ENCODE measurements at regions of chr15 and their contacts with region 1.

Region 1: DNA sequence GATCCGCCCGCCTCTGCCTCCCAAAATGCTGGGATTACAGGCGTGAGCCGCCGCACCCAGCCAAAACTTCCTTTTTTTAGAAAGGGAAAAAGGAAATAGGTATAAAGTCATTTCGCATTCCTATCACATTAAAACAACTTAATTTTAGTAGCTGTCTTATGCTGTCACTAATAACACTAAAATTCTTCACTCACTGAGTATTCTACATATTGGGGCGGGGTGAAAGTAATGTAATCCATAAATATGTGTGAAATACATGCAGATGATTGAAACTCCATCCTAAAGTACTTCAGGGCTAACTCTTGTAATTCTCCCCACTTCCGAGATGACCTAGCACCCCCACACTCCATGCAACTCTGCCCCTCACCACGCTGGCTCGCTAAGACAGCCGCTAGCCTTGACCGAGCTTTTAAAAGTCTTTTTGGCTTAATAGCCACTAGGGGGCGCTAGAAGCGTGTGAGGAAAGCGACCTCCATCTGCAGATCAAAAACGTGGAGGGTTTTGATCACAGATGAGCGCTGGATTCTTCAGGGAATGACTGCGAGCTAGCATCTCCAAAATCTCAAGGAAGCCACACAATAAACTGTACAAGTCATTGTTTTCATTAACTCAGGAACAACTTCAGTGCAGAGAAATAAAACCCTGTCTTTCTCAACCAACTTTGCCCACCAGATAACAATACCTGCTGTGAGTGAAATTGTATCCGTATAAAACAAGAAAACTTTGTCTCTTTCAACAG is 129.3 kb upstream of the IGF1R start:
- DNase-seq: peak; percentile 57
- H3K4me3 ChIP-seq: no peak overlapping the region
- H3K27ac ChIP-seq: no peak overlapping the region
- H3K4me1 ChIP-seq: no peaks in the 10 kb centered on the region
- H3K27me3 ChIP-seq: no peaks in the 10 kb centered on the region
- CTCF ChIP-seq: peak; percentile 63 to 83

Region 2: GRCh38 chr15:98442379-98442833 is 76.6 kb before region 1 on chr15:
- CTCF ChIA-PET with region 1: no interaction called
- dilution Hi-C with region 1: loop called (anchors 5 kb)
- in situ Hi-C with region 1: no loop called
- intact Hi-C with region 1: loop called (anchors 1 kb)
- DNase-seq: peak; percentile 86
- H3K4me3 ChIP-seq: no peak overlapping the region
- H3K27ac ChIP-seq: no peak overlapping the region
- H3K4me1 ChIP-seq: peaks cover 6% of the 10 kb centered on the region
- H3K27me3 ChIP-seq: no peaks in the 10 kb centered on the region
- CTCF ChIP-seq: peak; percentile 89 to 97

Region 3: GRCh38 chr15:98581715-98582114 is 62.7 kb after region 1 on chr15:
- CTCF ChIA-PET with region 1: no interaction called
- dilution Hi-C with region 1: no loop called
- in situ Hi-C with region 1: no loop called
- intact Hi-C with region 1: loop called (anchors 2 kb)
- DNase-seq: no peak
- H3K4me3 ChIP-seq: no peak overlapping the region
- H3K27ac ChIP-seq: no peak overlapping the region
- H3K4me1 ChIP-seq: peaks cover 3% of the 10 kb centered on the region
- H3K27me3 ChIP-seq: peaks cover 3% of the 10 kb centered on the region
- CTCF ChIP-seq: peak; percentile 23 to 40

Region 4: DNA sequence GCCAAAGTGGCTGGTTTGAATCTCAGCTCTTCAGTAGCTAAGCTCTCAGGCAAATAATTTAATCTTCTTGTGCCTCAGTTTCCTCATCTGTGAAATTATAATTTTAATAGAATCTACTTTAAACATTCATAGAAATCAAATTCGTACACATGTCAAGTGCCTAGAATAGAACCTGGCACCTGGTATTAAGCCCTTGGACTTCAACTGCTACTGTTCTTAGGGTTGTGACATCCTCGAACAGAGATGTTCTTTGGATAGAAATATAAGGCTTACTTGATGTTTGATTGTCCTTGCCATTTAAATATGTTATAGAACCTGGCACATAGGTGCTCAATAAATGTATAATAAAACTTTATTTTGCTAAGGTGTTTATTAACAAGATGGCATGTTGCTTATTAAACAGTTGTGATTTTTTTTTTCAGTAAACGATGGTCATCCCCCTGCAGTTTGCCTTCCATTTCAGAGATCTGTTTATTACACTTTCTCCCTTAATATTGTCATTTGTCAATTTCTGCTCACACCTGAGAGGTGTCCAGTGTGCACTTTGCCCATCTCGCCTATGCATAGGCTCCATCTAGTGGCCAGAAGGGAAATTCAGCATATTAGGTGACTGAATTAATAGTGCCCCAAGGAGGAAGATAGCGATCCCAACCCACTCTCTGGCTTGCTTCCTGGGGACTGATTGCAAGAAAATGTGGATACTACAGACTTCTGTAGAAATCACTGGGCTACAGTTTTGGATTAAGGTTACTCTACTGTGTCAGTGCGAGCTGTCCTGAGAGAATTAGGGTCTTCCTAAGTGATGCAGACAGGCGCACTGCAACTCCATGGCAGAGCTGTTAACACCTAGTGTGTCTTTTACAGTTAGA is 140.1 kb after region 1 on chr15:
- CTCF ChIA-PET with region 1: interaction called, 3 read pairs
- dilution Hi-C with region 1: no loop called
- in situ Hi-C with region 1: loop called (anchors 5 to 10 kb)
- intact Hi-C with region 1: loop called (anchors 1 kb)
- DNase-seq: peak; percentile 60
- H3K4me3 ChIP-seq: no peak overlapping the region
- H3K27ac ChIP-seq: no peak overlapping the region
- H3K4me1 ChIP-seq: peaks cover 49% of the 10 kb centered on the region
- H3K27me3 ChIP-seq: no peaks in the 10 kb centered on the region
- CTCF ChIP-seq: peak; percentile 91

Region 5: DNA sequence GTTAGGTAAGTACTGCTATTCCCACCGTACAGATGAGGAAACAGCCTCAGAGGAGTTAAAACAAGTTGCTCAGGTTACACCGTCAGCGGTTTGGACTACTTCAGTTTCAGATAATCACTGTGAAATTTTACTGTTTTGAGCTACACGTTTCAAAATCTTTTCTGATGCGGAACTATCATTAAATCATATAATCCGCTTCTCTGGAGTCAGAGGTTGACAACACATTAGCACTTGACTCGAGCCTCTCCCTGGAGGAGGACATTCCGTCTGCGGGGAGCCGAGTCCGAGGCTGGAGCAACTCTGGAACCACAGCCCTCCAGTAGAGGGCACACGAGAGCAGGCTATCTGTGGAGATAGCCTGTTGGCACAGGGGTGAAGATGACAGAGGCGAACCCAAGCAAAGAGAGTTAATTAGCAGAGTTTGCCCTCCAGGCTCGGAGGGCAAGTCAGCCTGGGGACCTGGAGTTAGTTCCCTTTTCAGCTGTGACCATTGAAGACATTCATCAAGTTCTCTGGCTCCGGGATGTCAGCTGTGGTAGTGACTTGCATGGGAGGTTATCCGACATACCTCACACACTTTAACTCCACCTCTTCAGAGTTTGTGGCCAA is 260.6 kb after region 1 on chr15:
- CTCF ChIA-PET with region 1: no interaction called
- dilution Hi-C with region 1: no loop called
- in situ Hi-C with region 1: no loop called
- intact Hi-C with region 1: loop called (anchors 2 kb)
- DNase-seq: peak; percentile 74
- H3K4me3 ChIP-seq: no peak overlapping the region
- H3K27ac ChIP-seq: peak overlapping the region; percentile 10
- H3K4me1 ChIP-seq: peaks cover 34% of the 10 kb centered on the region
- H3K27me3 ChIP-seq: no peaks in the 10 kb centered on the region
- CTCF ChIP-seq: peak; percentile 97

Region 6: DNA sequence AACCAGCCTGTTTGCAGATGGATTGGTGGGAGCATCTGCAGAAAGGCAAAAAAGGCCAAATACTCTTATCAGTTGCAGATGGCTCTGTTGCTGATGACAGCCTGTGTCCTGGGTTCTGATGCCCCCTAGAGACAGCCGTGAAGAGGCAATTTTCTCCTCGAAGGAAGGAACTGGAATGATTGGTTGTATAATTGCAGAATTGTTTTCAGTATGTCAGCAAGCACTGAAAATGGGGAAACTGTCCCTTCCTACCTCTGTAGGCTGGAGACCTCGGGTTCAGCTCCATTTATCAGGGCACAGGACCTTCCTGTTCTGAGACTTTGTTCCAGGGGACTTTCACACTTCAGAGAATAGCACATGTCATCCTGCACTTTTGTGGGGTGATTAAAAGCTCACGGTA is 385.6 kb after region 1 on chr15:
- CTCF ChIA-PET with region 1: no interaction called
- dilution Hi-C with region 1: no loop called
- in situ Hi-C with region 1: no loop called
- intact Hi-C with region 1: loop called (anchors 1 kb)
- DNase-seq: peak; percentile 52
- H3K4me3 ChIP-seq: no peak overlapping the region
- H3K27ac ChIP-seq: peak overlapping the region; percentile 94
- H3K4me1 ChIP-seq: peaks cover 69% of the 10 kb centered on the region
- H3K27me3 ChIP-seq: no peaks in the 10 kb centered on the region
- CTCF ChIP-seq: peak; percentile 67 to 84

Region 7: DNA sequence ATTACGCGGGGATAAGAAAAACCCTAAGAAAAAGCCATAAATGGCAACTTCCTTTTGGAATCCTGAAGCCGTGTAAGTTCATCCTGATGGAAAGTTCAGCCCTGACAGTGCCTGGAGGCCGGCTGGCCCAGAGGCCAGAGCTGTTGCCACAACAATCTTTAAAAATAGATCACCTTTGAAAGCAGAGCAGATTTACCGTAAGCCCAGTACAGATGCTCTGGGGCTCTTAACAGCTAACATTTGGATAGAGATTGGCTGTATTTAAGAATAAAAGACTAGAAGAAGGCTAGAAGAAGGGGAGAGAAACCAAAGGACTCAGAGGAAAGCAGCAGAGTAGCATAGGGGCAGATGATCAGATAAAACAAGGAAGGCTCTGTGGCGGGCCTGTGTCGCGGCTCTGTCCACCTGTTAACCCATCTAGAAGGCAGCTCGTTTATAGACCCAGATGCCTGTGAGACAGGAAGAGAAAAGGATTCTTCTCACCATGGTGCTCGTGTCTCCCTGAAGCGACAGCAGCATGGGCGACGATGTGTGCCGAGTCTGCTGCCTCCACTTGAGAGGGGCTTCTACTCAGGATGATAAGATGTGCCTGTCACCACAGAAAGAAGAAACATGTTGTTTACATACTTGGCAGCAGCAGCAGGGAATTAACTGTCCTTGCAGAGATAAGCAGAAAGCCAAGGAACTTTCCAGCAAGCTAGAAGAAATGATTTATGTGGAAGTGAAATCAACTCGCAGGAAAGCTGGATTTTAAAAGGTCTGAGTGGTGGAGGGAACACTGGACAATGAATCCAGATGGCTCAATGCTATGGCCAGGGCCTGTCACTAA is 655.8 kb after region 1 on chr15:
- CTCF ChIA-PET with region 1: no interaction called
- dilution Hi-C with region 1: no loop called
- in situ Hi-C with region 1: no loop called
- intact Hi-C with region 1: no loop called
- DNase-seq: no peak
- H3K4me3 ChIP-seq: no peak overlapping the region
- H3K27ac ChIP-seq: no peak overlapping the region
- H3K4me1 ChIP-seq: no peaks in the 10 kb centered on the region
- H3K27me3 ChIP-seq: no peaks in the 10 kb centered on the region
- CTCF ChIP-seq: no peak